ENCODE measurements at regions of chr3 and their contacts with region 1.

Region 1: DNA sequence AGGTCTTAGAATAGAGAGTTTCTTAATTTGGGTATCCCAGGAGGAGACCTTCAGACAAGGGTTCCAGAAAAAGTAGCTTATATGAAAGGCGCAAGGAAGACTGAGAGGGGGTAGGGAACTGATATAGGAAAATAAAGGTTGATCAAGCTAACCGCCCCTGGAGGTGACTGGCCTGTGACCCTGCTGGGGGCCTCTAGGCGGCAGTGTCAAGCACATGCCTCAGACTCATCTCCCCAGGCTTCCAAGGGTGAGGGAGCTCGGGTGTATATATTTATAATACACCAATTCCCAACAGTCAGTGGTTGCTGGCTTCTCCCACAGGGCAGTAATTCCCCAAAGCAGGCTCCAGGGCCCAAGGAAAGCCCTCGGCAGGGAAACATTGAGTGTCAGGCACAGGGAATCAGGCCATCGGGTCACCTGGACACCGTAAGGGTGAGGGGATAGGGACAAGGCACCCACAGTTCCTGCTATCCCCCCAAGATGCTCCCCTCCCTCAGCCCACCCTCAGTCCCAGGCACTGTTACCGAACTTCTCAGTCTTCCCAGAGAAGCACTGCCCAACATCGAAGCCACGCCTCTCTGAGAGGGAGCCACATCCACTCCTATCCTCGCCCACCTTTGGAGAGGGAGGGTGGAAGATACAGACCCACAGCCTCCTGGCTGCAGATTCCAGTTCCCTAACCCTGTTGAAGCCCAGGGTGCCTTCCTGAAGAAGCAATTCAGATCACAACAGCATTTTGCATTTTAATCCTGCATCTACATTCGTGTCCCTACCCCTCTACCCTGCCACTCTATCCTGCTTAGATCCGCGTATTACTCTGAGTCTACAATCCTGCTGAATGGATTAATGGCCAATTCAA is 19.5 kb upstream of the CAV3 start:
- DNase-seq: peak; percentile 24
- ATAC-seq: peak; percentile 98
- H3K4me3 ChIP-seq: no peak overlapping the region
- H3K27ac ChIP-seq: no peak overlapping the region
- H3K4me1 ChIP-seq: peaks cover 0 to 10% of the 10 kb centered on the region in 2 experiments; a peak in 2 of 4 replicates
- H3K27me3 ChIP-seq: no peaks in the 10 kb centered on the region
- CTCF ChIP-seq: peak; percentile 54 to 97 (median 81)
- POLR2A ChIP-seq: no peak
- RAD21 ChIP-seq: peak; percentile 57

Region 2: GRCh38 chr3:8204853-8205650 is 509.1 kb before region 1 on chr3:
- CTCF ChIA-PET with region 1: no interaction called
- POLR2A ChIA-PET with region 1: no interaction called
- RAD21 ChIA-PET with region 1: no interaction called
- intact Hi-C with region 1: no loop called
- DNase-seq: no peak
- ATAC-seq: no peak
- H3K4me3 ChIP-seq: no peak overlapping the region
- H3K27ac ChIP-seq: no peak overlapping the region
- H3K4me1 ChIP-seq: 0 out of 4 replicates have a peak, but pooled peaks cover 0 to 5% of the 10 kb centered on the region in 2 experiments
- H3K27me3 ChIP-seq: no peaks in the 10 kb centered on the region
- CTCF ChIP-seq: no peak
- POLR2A ChIP-seq: no peak
- RAD21 ChIP-seq: no peak

Region 3: DNA sequence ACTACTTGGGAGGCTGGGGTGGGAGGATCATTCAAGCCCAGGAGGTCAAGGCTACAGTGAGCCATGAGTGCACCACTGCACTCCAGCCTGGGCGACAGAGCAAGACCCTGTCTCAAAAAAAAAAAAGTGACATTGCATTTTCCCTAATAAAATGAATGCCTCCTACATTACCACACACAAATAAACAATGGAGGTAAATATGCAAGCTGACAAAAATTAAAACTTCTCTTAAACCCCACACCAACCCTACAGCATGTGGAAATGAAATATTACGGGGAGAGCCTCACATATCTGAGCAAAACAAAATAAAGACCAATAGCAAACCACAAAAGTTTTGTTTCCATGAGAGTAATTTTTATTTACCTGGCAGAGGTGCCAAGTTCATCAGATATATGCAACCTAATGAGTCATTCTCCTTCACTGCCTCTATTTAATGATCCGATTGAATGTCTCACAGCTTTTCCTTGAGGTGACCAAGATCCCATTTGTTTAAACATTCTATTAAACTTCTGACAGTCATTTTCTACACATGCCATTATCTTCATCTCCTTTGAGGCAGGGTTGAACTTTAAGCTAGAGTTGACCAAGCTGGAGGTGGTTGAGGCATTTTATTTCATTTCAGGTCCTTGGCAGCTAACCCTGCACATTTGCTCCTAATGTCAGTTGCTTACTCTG is 10.1 kb after region 1 on chr3:
- CTCF ChIA-PET with region 1: interaction called, 15 read pairs
- POLR2A ChIA-PET with region 1: no interaction called
- RAD21 ChIA-PET with region 1: no interaction called
- intact Hi-C with region 1: no loop called
- DNase-seq: no peak
- ATAC-seq: peak; percentile 42
- H3K4me3 ChIP-seq: no peak overlapping the region
- H3K27ac ChIP-seq: no peak overlapping the region
- H3K4me1 ChIP-seq: peaks cover 3 to 18% of the 10 kb centered on the region in 2 experiments; a peak in 3 of 4 replicates
- H3K27me3 ChIP-seq: no peaks in the 10 kb centered on the region
- CTCF ChIP-seq: no peak
- POLR2A ChIP-seq: no peak
- RAD21 ChIP-seq: no peak